ENCODE measurements at regions of chr1 and their contacts with region 1.

Region 1: DNA sequence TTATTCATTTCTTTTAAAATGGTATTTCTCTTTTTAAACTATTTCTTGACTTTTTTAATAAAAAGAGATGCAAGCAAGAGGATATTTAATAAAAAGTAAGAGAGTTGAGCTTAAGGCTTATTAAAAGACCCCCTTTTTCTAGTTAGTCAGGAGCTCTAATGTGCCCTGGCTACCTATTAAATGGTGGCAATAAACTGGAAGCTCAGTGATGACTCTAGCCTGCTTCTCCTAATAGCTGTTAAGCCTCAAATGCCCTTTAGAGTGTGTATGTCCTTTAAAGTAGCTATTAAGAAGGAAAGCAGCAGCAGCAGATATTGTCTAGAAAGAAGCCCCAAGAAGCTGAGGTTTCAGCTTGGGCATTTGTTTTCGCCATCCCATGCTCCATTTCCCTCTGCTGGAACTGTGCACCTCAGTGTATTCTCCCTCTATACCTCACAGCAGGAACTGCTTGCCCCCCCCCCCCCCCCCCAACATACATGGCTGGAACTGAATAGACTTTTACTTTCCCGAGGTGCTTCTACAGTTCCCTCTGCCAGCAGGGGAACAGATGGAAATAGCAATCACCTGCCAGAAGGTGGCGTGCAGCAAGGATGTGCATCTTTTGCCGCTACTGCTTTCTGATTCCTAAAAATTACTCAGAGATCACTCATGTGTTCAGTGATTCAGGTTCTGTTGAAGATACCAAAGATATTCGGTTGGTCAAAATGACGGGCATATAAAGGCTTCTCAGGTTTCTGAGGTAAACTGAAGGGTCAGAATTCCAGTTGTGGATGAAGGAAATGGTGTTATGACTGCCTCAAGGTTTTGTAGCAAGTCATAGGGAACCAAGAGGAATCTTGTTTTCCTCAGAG is 2.5 kb downstream of the RGS4 start:
- DNase-seq: peak; percentile 90
- H3K4me3 Mint-ChIP-seq: no peak overlapping the region
- H3K27ac Mint-ChIP-seq: no peak overlapping the region
- H3K4me1 Mint-ChIP-seq: peaks cover 5% of the 10 kb centered on the region
- H3K27me3 Mint-ChIP-seq: peaks cover 44% of the 10 kb centered on the region
- CTCF ChIP-seq: peak; percentile 88

Region 2: DNA sequence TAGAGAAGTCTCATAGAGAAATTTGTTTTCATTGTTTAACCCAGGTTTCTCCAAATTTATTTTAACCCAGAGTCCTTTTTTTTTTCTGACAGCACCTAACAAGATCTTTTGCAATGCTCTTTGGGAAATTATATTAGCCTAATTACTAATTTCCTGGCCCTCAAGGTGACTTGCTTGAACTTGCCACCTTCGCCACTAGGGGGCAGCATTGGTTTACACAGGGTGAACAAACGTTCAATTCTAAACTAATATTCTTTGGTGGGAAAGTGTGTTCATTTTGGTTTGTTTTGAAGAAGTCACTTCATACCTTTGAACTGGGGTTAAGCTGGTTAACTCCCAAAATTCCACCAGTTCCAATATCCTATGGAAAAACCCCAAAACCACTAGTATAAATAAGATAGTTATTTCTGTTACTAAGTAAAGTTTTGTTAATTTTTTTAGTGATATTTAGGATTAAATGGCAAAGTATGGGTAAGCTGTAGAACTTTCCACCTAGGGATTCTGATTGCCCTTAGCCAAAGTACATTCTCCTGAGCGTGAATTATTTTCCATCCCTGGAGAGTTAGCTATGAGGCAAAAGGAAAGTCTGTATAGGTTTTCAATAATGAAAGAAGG is 223.7 kb before region 1 on chr1:
- CTCF ChIA-PET with region 1: interaction called, 30 read pairs
- POLR2A ChIA-PET with region 1: no interaction called
- intact Hi-C with region 1: no loop called
- DNase-seq: peak; percentile 92
- H3K4me3 Mint-ChIP-seq: no peak overlapping the region
- H3K27ac Mint-ChIP-seq: no peak overlapping the region
- H3K4me1 Mint-ChIP-seq: peaks cover 7% of the 10 kb centered on the region
- H3K27me3 Mint-ChIP-seq: peaks cover 24% of the 10 kb centered on the region
- CTCF ChIP-seq: peak; percentile 96

Region 3: GRCh38 chr1:162878000-162878596 is 193.5 kb before region 1 on chr1:
- CTCF ChIA-PET with region 1: interaction called, 26 read pairs
- POLR2A ChIA-PET with region 1: no interaction called
- intact Hi-C with region 1: loop called (anchors 1 kb)
- DNase-seq: peak; percentile 87
- H3K4me3 Mint-ChIP-seq: no peak overlapping the region
- H3K27ac Mint-ChIP-seq: no peak overlapping the region
- H3K4me1 Mint-ChIP-seq: no peaks in the 10 kb centered on the region
- H3K27me3 Mint-ChIP-seq: peaks cover 26% of the 10 kb centered on the region
- CTCF ChIP-seq: peak; percentile 95

Region 4: GRCh38 chr1:162927421-162927820 is 144.2 kb before region 1 on chr1:
- CTCF ChIA-PET with region 1: no interaction called
- POLR2A ChIA-PET with region 1: no interaction called
- intact Hi-C with region 1: no loop called
- DNase-seq: no peak
- H3K4me3 Mint-ChIP-seq: no peak overlapping the region
- H3K27ac Mint-ChIP-seq: no peak overlapping the region
- H3K4me1 Mint-ChIP-seq: no peaks in the 10 kb centered on the region
- H3K27me3 Mint-ChIP-seq: no peaks in the 10 kb centered on the region
- CTCF ChIP-seq: no peak

Region 5: DNA sequence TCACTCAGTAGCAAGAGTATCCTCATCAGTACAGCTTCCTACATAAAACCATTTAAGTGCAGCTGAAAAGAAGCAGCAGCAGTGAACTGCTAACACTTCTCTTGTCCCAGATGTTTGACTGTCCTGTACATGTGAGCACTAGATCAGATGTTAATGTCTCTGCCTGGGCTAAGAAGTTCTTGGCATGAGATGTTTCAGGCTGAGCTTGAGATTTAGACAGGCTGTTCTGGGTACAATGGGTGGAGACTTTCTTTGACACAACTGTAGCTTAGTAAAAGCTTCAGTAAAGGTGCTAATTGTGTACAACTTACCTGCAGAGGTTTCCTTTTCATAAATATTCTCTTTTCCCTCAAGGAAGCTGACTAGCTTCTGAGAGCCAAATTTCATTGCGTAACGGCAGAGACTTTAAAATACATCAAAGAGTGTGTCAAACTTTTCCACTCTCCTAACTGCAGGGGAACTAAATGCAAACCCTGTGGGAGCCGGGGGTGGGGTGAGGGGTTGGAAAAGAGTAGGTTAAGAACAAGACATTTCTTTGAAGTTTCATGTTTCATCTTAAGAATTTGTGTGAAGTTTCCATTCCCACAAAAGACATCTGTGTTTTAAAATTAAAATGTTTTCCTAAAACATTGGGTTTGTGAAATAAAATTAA is 128.6 kb before region 1 on chr1:
- CTCF ChIA-PET with region 1: interaction called, 7 read pairs
- POLR2A ChIA-PET with region 1: no interaction called
- intact Hi-C with region 1: loop called (anchors 5 kb)
- DNase-seq: peak; percentile 55
- H3K4me3 Mint-ChIP-seq: no peak overlapping the region
- H3K27ac Mint-ChIP-seq: no peak overlapping the region
- H3K4me1 Mint-ChIP-seq: peaks cover 11% of the 10 kb centered on the region
- H3K27me3 Mint-ChIP-seq: no peaks in the 10 kb centered on the region
- CTCF ChIP-seq: no peak

Region 6: DNA sequence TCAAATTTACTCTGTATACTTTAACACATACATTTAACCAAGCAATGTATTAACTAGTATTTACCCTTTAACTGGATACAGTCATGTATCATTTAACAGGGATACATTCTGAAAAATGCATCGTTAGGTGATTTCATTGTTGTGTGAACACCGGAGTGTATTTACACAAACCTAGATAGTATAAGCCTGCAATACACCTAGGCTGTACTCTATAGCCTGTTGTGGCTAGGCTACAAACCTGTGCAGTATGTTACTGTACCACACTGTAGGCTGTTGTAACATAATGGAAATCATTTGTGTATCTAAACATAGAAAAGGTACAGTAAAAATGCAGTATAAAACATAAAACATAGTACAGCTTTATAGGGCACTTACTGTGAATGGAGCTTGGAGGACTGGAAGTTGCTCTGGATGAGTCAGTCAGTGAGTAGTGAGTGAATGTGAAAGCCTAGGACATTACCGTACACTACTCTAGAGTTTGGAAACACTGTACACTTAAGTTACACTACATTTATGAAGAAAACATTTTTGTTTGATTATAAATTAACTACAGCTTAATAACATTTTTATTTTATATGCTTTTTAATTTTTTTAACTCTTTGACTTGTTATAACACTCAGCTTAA is 18.8 kb after region 1 on chr1:
- CTCF ChIA-PET with region 1: interaction called, 11 read pairs
- POLR2A ChIA-PET with region 1: interaction called, 3 read pairs
- intact Hi-C with region 1: no loop called
- DNase-seq: peak; percentile 51
- H3K4me3 Mint-ChIP-seq: no peak overlapping the region
- H3K27ac Mint-ChIP-seq: no peak overlapping the region
- H3K4me1 Mint-ChIP-seq: peaks cover 7% of the 10 kb centered on the region
- H3K27me3 Mint-ChIP-seq: no peaks in the 10 kb centered on the region
- CTCF ChIP-seq: no peak

Region 7: DNA sequence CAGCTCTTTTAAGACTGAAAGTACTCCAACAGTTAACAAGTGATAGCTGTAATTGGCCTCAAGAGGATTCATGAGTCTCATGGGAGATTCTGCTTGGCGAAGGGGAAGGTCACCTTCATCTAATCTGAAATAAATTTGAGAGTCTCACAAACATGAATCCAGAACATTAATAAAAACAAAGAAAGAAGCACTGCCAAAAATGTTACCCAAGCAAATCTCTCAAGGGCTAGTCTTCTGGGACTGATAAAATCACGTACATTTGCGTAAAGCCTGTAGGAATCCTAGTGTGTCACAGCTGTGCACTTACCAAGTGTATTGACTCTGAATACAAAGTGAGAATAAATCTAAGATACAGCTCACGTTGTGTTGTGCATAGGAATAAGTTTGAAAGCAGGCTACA is 228.9 kb after region 1 on chr1:
- CTCF ChIA-PET with region 1: interaction called, 10 read pairs
- POLR2A ChIA-PET with region 1: no interaction called
- intact Hi-C with region 1: no loop called
- DNase-seq: no peak
- H3K4me3 Mint-ChIP-seq: no peak overlapping the region
- H3K27ac Mint-ChIP-seq: no peak overlapping the region
- H3K4me1 Mint-ChIP-seq: no peaks in the 10 kb centered on the region
- H3K27me3 Mint-ChIP-seq: no peaks in the 10 kb centered on the region
- CTCF ChIP-seq: no peak